Spleen (tissue), 13 donors: ENCODE measurements at regions of chr13 and their contacts with region 1.

Region 1: GRCh38 chr13:52128714-52129700 is at the start of gene NEK5:
- DNase-seq: peak; percentile 91
- H3K4me3 ChIP-seq: peak within 1 kb of the TSS; percentile 57 to 79 (median 70)
- H3K27ac ChIP-seq: no peak within 1 kb of the TSS
- H3K4me1 ChIP-seq: peaks cover 11 to 23% (median 20%) of the 10 kb centered on the region in 6 donors
- H3K27me3 ChIP-seq: peaks cover 0 to 21% (median 6%) of the 10 kb centered on the region in 7 donors
- CTCF ChIP-seq: peak; percentile 3 to 83 (median 63)
- POLR2A ChIP-seq: no peak
- total RNA-seq, gene NEK5: 0.10 to 0.30 (median 0.26) TPM in 3 of 7 donors, not detected in the others

Region 2: GRCh38 chr13:51814825-51815650 is 314.0 kb before region 1 on chr13:
- intact Hi-C with region 1: loop called (anchors 10 kb)
- DNase-seq: no peak
- H3K4me3 ChIP-seq: peak overlapping the region in 4 of 8 donors; percentile 4 to 57 (median 16)
- H3K27ac ChIP-seq: peak overlapping the region in 5 of 8 donors; percentile 17 to 63 (median 56)
- H3K4me1 ChIP-seq: peaks cover 0 to 84% (median 40%) of the 10 kb centered on the region in 6 donors
- H3K27me3 ChIP-seq: no peaks in the 10 kb centered on the region
- CTCF ChIP-seq: peak; percentile 79 to 96 (median 92)
- POLR2A ChIP-seq: no peak

Region 3: DNA sequence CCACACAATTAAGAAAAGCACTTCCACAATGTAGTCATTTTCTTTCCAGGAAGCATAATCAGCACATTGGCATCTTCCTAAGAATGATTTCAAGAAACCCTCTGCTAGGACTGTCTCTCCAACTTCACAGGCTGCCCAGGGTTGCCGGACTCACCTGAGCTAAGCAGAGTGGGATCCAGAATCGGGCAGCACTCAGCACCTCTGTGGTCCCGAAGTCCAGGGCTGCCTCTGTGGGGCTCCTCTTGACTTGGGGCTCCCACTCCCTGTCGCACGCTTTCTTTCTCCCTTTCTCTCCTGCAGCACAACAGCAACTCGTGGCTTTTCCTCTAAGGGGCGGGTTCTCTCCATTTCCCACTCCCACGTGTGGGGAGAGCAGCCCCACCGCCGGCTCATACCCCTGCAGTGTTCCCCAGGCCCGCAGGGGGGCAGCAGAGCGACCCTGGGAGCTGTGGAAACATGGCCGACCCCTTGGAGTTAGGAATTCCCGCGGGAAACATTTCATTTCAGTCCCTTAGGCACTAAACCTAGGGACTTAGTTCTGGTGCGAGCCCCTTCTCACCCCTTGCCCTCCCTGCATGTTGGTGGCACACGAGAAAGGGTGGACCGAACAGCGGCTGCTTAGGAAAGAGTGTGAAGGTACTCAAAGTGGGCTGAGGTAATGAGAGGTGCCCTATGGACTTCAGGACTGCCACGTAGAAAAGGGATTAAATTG is 284.0 kb before region 1 on chr13 and contains the start of gene TMEM272:
- intact Hi-C with region 1: loop called (anchors 10 kb)
- DNase-seq: peak; percentile 84
- H3K4me3 ChIP-seq: peak within 1 kb of the TSS in 2 of 8 donors; percentile 11 to 46
- H3K27ac ChIP-seq: peak within 1 kb of the TSS in 1 of 8 donors; percentile 31
- H3K4me1 ChIP-seq: peaks cover 0 to 14% (median 6%) of the 10 kb centered on the region in 6 donors
- H3K27me3 ChIP-seq: peaks cover 0 to 12% (median 0%) of the 10 kb centered on the region in 7 donors
- CTCF ChIP-seq: peak; percentile 53 to 92 (median 84)
- POLR2A ChIP-seq: no peak
- total RNA-seq, gene TMEM272: 0.39 to 3.3 (median 1.7) TPM

Region 4: GRCh38 chr13:51895906-51896888 is 232.8 kb before region 1 on chr13:
- intact Hi-C with region 1: loop called (anchors 5 kb)
- DNase-seq: peak; percentile 81
- H3K4me3 ChIP-seq: no peak overlapping the region
- H3K27ac ChIP-seq: no peak overlapping the region
- H3K4me1 ChIP-seq: no peaks in the 10 kb centered on the region
- H3K27me3 ChIP-seq: peaks cover 0 to 3% (median 0%) of the 10 kb centered on the region in 7 donors
- CTCF ChIP-seq: peak in 8 of 11 experiments; percentile 7 to 61 (median 52)
- POLR2A ChIP-seq: no peak

Region 5: DNA sequence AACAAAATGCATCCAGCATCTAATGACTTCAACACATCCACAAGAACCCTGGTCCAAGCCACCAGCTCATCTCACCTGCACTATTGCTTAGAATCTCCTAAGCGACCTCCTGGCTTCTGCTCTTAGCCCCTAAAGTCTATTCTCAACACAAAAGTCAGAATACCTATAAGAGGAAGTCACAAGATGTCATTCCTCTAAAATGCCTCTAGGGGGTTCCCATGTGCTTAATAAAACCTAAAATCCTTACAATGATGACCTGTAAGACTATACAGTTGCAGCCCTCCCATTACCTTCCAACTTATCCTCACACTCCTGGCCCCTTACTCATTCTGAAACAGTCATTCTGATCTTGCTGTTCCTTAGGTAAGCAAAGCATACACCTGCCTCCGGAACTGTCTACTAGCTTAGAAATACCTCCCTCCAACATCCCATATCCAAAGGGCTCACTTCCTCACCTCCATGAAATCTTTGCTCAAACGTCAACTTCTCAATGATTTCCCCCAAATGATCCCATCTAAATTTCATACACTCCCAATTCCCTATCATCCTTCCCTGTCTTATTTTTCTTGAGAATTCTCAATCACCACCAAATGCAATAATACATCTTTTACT is 127.8 kb before region 1 on chr13:
- intact Hi-C with region 1: loop called (anchors 10 kb)
- DNase-seq: no peak
- H3K4me3 ChIP-seq: no peak overlapping the region
- H3K27ac ChIP-seq: no peak overlapping the region
- H3K4me1 ChIP-seq: peaks cover 0 to under 1% (median 0%) of the 10 kb centered on the region in 6 donors
- H3K27me3 ChIP-seq: peaks cover 0 to 6% (median 0%) of the 10 kb centered on the region in 7 donors
- CTCF ChIP-seq: peak; percentile 37 to 80 (median 72)
- POLR2A ChIP-seq: no peak

Region 6: DNA sequence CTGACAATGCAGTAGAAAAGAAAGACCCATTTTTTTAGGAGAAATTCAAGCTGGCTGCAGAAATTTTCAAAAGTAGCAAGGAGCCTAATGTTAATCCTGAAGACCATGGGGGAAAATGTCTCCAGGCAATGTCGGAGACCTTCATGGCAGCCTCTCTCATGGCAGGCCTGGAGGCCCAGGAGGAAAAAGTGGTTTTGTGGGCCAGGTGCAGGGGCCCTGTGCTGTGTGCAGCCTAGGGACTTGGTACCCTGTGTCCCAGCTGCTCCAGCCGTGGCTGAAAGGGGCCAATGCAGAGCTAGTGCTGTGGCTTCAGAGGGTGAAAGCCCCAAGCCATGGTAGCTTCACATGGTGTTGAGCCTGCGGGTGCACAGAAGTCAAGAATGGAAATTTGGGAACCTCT is 112.7 kb before region 1 on chr13:
- intact Hi-C with region 1: no loop called
- DNase-seq: no peak
- H3K4me3 ChIP-seq: no peak overlapping the region
- H3K27ac ChIP-seq: no peak overlapping the region
- H3K4me1 ChIP-seq: peaks cover 14 to 37% (median 27%) of the 10 kb centered on the region in 6 donors
- H3K27me3 ChIP-seq: peaks cover 0 to 6% (median 0%) of the 10 kb centered on the region in 7 donors
- CTCF ChIP-seq: no peak
- POLR2A ChIP-seq: no peak